ENCODE measurements at regions of chr1 and their contacts with region 1.

Region 1: DNA sequence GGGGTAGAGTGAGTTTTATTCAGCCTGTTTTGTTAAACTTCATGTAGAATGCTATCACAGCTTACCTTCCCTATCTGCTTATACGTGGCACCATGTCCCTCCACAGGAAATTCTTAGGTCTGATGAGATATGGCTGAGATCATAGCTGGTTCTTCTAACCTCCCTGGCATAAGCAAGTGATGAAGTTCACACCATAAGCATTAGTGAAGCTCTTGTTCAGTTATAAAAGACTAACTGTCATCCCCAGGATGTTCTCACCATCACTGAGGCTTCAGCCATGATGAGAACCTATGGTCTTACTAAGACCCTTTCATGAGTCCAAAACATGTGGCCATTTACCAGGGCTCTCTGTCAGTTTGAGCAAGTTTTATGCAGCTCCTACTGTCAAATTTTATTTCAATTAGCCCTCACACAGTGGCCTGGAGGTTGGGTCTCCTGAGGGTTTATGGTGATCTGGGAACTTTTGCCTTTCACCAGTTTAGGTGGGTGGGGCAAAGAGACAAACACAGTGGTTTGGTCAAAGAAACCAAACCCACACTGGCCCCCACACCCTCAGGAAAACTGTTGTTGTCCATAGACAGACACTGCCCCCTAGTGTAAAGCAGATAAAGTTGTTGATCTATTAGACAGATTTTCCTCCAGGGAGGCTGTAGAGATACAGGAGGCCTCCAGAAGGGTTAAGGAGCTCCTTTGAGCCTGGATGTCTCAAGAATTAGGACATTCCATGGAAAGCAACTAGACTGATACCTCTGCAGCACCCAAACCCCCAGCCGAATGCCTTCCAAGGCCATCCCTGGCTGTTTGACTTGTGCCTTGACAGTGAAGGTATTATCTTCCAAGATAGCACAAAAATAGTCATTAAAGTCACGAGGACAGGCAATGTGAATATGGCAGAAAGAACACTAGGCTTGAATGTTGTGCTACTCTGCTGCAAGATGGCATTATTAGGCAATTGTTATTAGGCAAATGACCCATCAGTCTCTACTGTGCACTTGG is 5.0 kb downstream of the SLC22A15 start:
- DNase-seq: peak; percentile 14
- H3K4me3 Mint-ChIP-seq: no peak overlapping the region
- H3K27ac Mint-ChIP-seq: no peak overlapping the region
- H3K4me1 Mint-ChIP-seq: no peaks in the 10 kb centered on the region
- H3K27me3 Mint-ChIP-seq: peaks cover 15% of the 10 kb centered on the region

Region 2: DNA sequence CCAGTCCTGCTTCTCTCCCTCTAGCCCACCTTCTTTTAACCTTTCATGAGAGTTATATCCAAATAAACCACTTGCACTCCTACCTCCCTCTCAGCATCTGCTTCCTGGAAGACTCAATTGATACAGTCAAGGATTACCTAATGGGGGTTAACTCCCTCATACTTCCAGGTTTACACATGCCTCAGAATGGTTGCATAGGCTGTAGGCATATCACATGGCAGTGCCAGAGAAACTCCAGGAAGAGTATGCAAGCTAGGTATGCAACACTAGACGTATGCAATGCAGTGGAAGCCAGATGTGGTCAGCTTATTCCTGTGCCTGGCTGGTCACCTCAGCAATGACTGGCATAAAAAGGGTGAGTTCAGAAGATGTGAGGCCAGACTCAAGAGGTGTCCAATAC is 372.3 kb before region 1 on chr1:
- CTCF ChIA-PET with region 1: interaction called, 3 read pairs
- intact Hi-C with region 1: loop called (anchors 2 kb)
- DNase-seq: no peak
- H3K4me3 Mint-ChIP-seq: no peak overlapping the region
- H3K27ac Mint-ChIP-seq: no peak overlapping the region
- H3K4me1 Mint-ChIP-seq: no peaks in the 10 kb centered on the region
- H3K27me3 Mint-ChIP-seq: peaks cover 12% of the 10 kb centered on the region

Region 3: DNA sequence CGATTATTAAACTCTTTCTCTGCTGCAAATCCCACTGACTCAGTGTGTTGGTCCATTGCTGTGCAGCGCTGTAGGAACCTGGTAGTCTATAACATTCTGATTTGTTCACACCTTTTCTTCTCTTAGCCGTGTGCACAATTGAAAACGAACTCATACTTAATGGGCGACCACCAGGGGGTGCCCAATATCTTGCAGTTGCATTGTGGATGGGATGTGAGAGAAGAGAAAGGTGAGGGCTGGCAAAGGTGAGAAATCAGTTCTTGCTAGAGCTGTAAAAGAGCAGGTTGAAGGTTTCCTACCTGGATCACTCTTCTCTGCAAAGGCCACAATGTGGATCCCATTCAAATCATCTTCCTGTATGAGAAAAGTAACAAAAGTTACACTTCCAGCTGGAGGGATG is 263.8 kb before region 1 on chr1:
- CTCF ChIA-PET with region 1: interaction called, 13 read pairs
- intact Hi-C with region 1: loop called (anchors 1 kb)
- DNase-seq: peak; percentile 52
- H3K4me3 Mint-ChIP-seq: no peak overlapping the region
- H3K27ac Mint-ChIP-seq: no peak overlapping the region
- H3K4me1 Mint-ChIP-seq: no peaks in the 10 kb centered on the region
- H3K27me3 Mint-ChIP-seq: peaks cover 4% of the 10 kb centered on the region

Region 4: GRCh38 chr1:115793162-115793561 is 188.1 kb before region 1 on chr1:
- CTCF ChIA-PET with region 1: no interaction called
- intact Hi-C with region 1: no loop called
- DNase-seq: no peak
- H3K4me3 Mint-ChIP-seq: no peak overlapping the region
- H3K27ac Mint-ChIP-seq: no peak overlapping the region
- H3K4me1 Mint-ChIP-seq: no peaks in the 10 kb centered on the region
- H3K27me3 Mint-ChIP-seq: peaks cover 22% of the 10 kb centered on the region

Region 5: DNA sequence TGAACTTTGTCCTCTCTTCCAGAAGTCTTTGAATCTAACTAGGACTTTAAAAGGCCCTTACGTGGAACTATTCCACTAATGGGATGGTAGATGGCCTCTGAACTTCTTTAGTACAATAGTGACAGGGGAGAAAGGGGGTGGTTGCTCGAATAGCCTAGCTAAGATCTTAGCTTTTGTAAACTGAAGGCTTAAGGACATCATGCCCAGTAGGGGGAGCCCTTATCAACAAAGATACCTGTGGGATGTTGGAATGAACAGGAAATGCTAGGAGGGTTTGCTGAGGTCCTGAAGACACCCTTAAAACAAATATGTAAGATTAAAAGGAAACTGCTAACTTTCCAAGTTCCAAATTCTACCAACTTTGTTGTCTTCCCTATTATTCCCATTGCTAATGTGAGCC is 173.6 kb before region 1 on chr1:
- CTCF ChIA-PET with region 1: interaction called, 13 read pairs
- intact Hi-C with region 1: loop called (anchors 1 kb)
- DNase-seq: peak; percentile 67
- H3K4me3 Mint-ChIP-seq: no peak overlapping the region
- H3K27ac Mint-ChIP-seq: no peak overlapping the region
- H3K4me1 Mint-ChIP-seq: no peaks in the 10 kb centered on the region
- H3K27me3 Mint-ChIP-seq: peaks cover 20% of the 10 kb centered on the region

Region 6: DNA sequence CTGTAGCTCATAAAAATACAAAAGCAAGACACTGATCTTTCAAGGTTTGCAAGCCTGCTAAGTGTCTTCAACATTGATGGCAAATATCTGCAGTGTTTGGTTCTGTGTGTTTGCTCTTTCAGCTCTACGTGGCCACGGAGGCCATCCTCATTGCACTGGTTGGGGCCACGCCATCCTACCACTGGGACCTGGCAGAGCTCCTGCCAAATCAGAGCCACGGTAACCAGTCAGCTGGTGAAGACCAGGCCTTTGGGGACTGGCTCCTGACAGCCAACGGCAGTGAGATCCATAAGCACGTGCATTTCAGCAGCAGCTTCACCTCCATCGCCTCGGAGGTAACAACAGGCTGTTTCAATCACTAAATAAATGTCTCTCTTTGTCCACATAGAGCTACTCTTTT is 10.6 kb after region 1 on chr1:
- CTCF ChIA-PET with region 1: interaction called, 27 read pairs
- intact Hi-C with region 1: no loop called
- DNase-seq: no peak
- H3K4me3 Mint-ChIP-seq: no peak overlapping the region
- H3K27ac Mint-ChIP-seq: no peak overlapping the region
- H3K4me1 Mint-ChIP-seq: peaks cover 5% of the 10 kb centered on the region
- H3K27me3 Mint-ChIP-seq: no peaks in the 10 kb centered on the region

Region 7: DNA sequence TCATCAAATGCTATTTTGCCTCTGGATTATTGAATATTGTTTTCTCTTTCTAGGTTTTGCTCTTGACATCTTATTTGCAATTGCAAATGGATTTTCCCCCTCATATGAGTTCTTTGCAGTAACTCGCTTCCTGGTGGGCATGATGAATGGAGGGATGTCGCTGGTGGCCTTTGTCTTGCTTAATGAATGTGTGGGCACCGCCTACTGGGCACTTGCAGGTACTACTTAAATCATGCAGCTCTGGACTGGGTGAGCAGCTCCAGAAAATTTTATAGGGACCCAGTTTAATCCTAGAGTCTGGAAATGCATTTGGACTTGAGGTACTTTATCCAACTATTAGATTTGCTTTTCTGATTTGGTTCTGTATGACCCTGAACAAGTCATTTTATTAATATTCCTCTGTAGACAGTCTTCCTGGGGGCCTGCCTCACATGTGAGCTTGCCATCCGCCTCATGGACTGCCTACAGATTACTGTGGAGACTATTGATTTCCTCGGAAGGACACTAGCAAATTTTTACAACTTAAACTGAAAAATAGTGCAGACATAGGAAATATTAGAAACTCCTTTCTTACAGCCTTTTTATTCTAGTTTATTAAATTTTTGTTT is 39.5 kb after region 1 on chr1:
- CTCF ChIA-PET with region 1: interaction called, 11 read pairs
- intact Hi-C with region 1: loop called (anchors 2 kb)
- DNase-seq: peak; percentile 70
- H3K4me3 Mint-ChIP-seq: no peak overlapping the region
- H3K27ac Mint-ChIP-seq: no peak overlapping the region
- H3K4me1 Mint-ChIP-seq: no peaks in the 10 kb centered on the region
- H3K27me3 Mint-ChIP-seq: no peaks in the 10 kb centered on the region

Region 8: GRCh38 chr1:116044071-116044470 is 62.8 kb after region 1 on chr1:
- CTCF ChIA-PET with region 1: no interaction called
- intact Hi-C with region 1: no loop called
- DNase-seq: no peak
- H3K4me3 Mint-ChIP-seq: no peak overlapping the region
- H3K27ac Mint-ChIP-seq: no peak overlapping the region
- H3K4me1 Mint-ChIP-seq: no peaks in the 10 kb centered on the region
- H3K27me3 Mint-ChIP-seq: peaks cover 22% of the 10 kb centered on the region

Measured in activated naive CD4-positive, alpha-beta T cell treated with anti-CD3 and anti-CD28 coated beads for 36 hours (primary cell).